Common myeloid progenitor, CD34-positive (primary cell): ENCODE measurements at regions of chr5 and their contacts with region 1.

Region 1: DNA sequence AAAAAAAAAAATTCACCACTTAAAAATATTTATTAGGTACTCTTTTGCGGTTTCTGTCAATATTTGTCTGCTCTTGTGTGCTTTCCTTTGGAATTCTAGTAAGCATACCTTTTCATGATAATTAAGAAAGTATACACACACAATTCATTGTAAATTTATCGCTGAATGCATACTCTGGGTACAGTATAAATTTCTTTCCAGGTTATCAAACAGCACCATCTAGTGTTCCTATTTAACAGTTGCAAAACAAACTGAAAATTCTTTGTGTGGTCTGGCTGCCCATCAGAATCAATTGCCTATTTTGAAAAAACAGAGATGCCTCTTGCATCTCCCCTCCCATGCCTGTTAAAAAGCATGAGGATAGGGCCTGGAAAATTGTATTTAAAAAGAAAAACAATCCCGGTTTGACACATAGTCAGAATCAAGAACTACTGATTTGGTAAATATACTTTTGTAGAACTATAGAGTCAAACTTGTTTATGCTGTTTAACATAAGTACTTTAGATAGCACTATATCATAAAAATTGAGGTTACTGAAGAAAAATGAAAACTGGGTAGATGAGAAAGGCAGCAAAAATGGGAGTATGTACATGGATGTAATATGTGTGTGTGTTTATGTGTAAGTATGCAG is 16.2 kb downstream of the PGGT1B start:
- DNase-seq: peak; percentile 45 to 67 (median 63)
- H3K4me3 ChIP-seq: no peak overlapping the region
- H3K27ac ChIP-seq: no peak overlapping the region
- H3K4me1 ChIP-seq: no peaks in the 10 kb centered on the region
- H3K27me3 ChIP-seq: no peaks in the 10 kb centered on the region

Region 2: DNA sequence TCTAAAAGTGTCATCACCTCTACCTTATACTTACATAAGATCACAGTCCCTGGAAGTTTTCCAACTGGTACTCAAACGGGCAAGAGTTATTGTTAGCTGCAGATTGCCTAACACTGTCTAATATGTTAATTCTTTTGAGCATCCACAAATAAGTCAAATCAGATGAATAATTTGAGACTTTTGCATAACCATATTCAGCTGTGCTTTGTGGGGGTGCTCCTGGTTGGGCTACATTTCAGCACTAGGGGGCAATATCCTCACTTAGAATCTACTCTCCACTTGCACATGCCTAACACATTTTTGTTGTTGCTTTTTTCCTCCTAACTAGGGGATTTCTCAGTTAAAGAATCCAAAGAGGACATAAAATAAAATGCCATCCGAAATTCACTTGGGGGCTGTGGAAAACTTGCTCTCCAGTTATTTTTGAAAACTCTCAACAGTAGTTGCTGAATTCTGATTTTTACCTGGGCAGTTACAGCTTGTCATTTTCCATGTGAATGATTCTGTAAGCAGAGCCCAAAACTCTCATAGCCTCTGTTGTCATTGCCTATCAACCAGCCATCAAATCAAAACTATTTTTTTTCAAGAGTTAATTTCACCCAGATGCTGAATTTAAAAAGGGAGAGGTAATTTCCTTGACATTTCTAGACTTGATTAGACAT is 148.3 kb before region 1 on chr5:
- CTCF ChIA-PET with region 1: interaction called, 88 read pairs
- POLR2A ChIA-PET with region 1: no interaction called
- DNase-seq: peak; percentile 44 to 73 (median 65)
- H3K4me3 ChIP-seq: no peak overlapping the region
- H3K27ac ChIP-seq: no peak overlapping the region
- H3K4me1 ChIP-seq: no peaks in the 10 kb centered on the region
- H3K27me3 ChIP-seq: peaks cover 0 to 10% (median 0%) of the 10 kb centered on the region in 5 experiments

Region 3: DNA sequence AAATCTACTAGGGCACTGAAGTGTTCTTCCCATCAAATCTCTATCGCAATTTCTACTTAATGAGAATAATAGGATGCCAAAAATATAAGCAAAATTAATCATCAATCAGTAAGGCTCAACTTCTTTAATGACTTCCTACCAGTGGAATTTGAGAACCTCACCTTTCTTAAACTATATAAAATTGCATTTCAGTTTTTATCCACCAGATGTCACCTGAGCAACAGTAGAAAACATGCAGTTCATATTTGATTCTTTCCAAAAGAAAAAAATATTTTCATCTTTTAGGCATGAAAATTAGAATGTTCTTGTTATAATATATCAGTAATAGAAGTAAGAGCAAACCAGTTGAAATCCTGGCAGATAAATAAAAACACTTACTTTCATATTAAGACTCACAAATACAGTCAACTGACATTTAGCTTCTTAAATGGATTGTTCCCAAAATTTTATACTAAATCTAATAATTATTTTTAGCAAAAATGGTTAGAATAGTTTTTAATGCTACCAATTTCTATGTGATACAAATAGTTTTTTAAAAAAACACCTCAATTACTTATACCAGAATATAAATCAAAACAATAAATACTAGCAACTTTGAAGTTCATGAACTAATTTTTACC is 63.4 kb after region 1 on chr5:
- CTCF ChIA-PET with region 1: no interaction called
- POLR2A ChIA-PET with region 1: no interaction called
- DNase-seq: peak; percentile 39 to 71 (median 58)
- H3K4me3 ChIP-seq: no peak overlapping the region
- H3K27ac ChIP-seq: no peak overlapping the region
- H3K4me1 ChIP-seq: no peaks in the 10 kb centered on the region
- H3K27me3 ChIP-seq: peaks cover 0 to 3% (median 0%) of the 10 kb centered on the region in 5 experiments